CD4-positive, alpha-beta T cell (primary cell): ENCODE measurements at regions of chr15 and their contacts with region 1.

Region 1: GRCh38 chr15:92226014-92226612 is 167.6 kb upstream of the ST8SIA2 start:
- DNase-seq: peak in 4 of 14 experiments; percentile 3 to 14 (median 8)
- ATAC-seq: no peak
- H3K4me3 ChIP-seq: no peak overlapping the region
- H3K4me3 Mint-ChIP-seq: no peak overlapping the region
- H3K27ac ChIP-seq: no peak overlapping the region
- H3K27ac Mint-ChIP-seq: no peak overlapping the region
- H3K4me1 ChIP-seq: no peaks in the 10 kb centered on the region
- H3K4me1 Mint-ChIP-seq: no peaks in the 10 kb centered on the region
- H3K27me3 ChIP-seq: peaks cover 0 to 4% of the 10 kb centered on the region in 2 experiments
- H3K27me3 Mint-ChIP-seq: peaks cover 7% of the 10 kb centered on the region
- CTCF ChIP-seq: no peak

Region 2: GRCh38 chr15:92097474-92098178 is 128.5 kb before region 1 on chr15:
- CTCF ChIA-PET with region 1: no interaction called
- POLR2A ChIA-PET with region 1: no interaction called
- intact Hi-C with region 1: loop called in 1 of 2 experiments (anchors 5 kb)
- DNase-seq: peak in 12 of 14 experiments; percentile 16 to 71 (median 28)
- ATAC-seq: peak; percentile 52
- H3K4me3 ChIP-seq: no peak overlapping the region
- H3K4me3 Mint-ChIP-seq: peak overlapping the region; percentile 40
- H3K27ac ChIP-seq: no peak overlapping the region
- H3K27ac Mint-ChIP-seq: peak overlapping the region; percentile 63
- H3K4me1 ChIP-seq: peaks cover 50% of the 10 kb centered on the region
- H3K4me1 Mint-ChIP-seq: peaks cover 64% of the 10 kb centered on the region
- H3K27me3 ChIP-seq: no peaks in the 10 kb centered on the region
- H3K27me3 Mint-ChIP-seq: no peaks in the 10 kb centered on the region
- CTCF ChIP-seq: peak; percentile 51